Mucosa of descending colon (tissue), 3 donors: ENCODE measurements at regions of chr5 and their contacts with region 1.

Region 1: GRCh38 chr5:41843456-41844370 is 26.5 kb downstream of the OXCT1 start:
- DNase-seq: peak in 1 of 3 donors; percentile 54
- ATAC-seq: peak; percentile 86
- H3K4me3 ChIP-seq: no peak overlapping the region
- H3K4me1 ChIP-seq: no peaks in the 10 kb centered on the region
- CTCF ChIP-seq: peak; percentile 29

Region 2: DNA sequence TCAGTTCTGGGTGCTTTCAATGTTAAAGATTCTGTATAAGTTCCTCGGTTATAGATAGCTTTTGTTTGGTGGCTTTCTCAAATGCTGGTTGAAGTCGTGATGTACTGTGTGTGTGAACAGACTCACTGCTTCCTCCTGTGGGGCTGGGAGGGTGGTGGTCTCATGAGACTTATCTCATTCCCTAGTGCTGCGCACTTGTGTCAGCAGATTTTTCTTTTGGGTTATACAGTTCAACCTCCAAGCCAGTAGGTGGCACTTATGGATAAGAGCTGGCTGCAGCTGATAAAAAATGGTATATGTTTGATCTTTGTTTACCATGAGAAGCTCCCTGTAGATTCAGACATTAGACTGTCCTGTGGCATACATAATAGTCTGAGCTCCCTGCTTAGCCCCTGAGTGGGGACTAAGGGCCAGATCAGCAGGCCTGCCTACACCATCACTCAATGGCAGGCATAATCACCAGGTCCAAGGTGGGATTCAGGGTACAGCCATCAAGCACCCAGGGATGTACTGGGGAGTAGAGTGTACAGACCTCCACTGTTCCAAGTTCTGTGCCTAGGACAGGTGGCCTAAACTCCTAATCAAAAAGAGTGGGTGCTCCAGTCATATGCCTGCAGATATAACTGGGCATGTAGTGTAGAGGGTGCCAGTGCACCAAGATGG is 147.7 kb before region 1 on chr5:
- intact Hi-C with region 1: loop called in 1 of 2 experiments (anchors 5 kb)
- DNase-seq: peak in 1 of 3 donors; percentile 5
- ATAC-seq: peak; percentile 33
- H3K4me3 ChIP-seq: no peak overlapping the region
- H3K4me1 ChIP-seq: no peaks in the 10 kb centered on the region
- CTCF ChIP-seq: no peak

Region 3: GRCh38 chr5:41728276-41728675 is 115.4 kb before region 1 on chr5:
- intact Hi-C with region 1: no loop called
- DNase-seq: no peak
- ATAC-seq: no peak
- H3K4me3 ChIP-seq: no peak overlapping the region
- H3K4me1 ChIP-seq: no peaks in the 10 kb centered on the region
- CTCF ChIP-seq: no peak